GM18951 (cell line): ENCODE measurements at regions of chr11 and their contacts with region 1.

Region 1: DNA sequence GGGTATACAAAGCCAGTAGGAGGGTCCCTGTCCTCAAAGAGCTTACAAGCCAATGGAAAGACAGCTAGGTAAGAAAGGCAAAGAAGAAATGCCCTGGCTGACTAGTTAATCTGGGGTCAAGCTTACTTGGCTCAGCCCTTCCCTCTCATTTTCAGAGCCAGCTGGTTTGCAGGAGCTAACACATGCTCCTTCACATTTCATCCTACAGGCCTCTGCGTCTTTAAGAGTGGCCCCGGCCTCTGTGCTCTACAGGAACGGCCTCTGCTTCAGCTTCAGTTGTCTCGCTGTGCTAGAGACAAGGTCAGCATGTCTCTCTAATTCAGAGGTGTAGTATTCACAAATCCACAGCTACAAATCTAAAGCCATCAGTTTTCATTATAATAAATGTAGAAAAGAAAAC is 15.2 kb downstream of the ALKBH8 start:
- POLR2A ChIP-seq: no peak

Region 2: GRCh38 chr11:107689317-107690202 is 139.3 kb after region 1 on chr11:
- in situ Hi-C with region 1: loop called (anchors 10 kb)
- POLR2A ChIP-seq: no peak